Colonic mucosa (tissue), 4 donors: ENCODE measurements at regions of chr4 and their contacts with region 1.

Region 1: GRCh38 chr4:7803992-7804755 is 135.5 kb downstream of the AFAP1 start:
- DNase-seq: peak; percentile 92
- H3K4me3 ChIP-seq: no peak overlapping the region
- H3K27ac ChIP-seq: no peak overlapping the region
- H3K4me1 ChIP-seq: no peaks in the 10 kb centered on the region
- H3K27me3 ChIP-seq: no peaks in the 10 kb centered on the region
- CTCF ChIP-seq: peak; percentile 87

Region 2: GRCh38 chr4:7761720-7762119 is 42.5 kb before region 1 on chr4:
- intact Hi-C with region 1: loop called (anchors 2 kb)
- DNase-seq: peak; percentile 65
- H3K4me3 ChIP-seq: no peak overlapping the region
- H3K27ac ChIP-seq: no peak overlapping the region
- H3K4me1 ChIP-seq: no peaks in the 10 kb centered on the region
- H3K27me3 ChIP-seq: no peaks in the 10 kb centered on the region
- CTCF ChIP-seq: peak; percentile 61